GM12878 (cell line): ENCODE measurements at regions of chr15 and their contacts with region 1.

Region 1: DNA sequence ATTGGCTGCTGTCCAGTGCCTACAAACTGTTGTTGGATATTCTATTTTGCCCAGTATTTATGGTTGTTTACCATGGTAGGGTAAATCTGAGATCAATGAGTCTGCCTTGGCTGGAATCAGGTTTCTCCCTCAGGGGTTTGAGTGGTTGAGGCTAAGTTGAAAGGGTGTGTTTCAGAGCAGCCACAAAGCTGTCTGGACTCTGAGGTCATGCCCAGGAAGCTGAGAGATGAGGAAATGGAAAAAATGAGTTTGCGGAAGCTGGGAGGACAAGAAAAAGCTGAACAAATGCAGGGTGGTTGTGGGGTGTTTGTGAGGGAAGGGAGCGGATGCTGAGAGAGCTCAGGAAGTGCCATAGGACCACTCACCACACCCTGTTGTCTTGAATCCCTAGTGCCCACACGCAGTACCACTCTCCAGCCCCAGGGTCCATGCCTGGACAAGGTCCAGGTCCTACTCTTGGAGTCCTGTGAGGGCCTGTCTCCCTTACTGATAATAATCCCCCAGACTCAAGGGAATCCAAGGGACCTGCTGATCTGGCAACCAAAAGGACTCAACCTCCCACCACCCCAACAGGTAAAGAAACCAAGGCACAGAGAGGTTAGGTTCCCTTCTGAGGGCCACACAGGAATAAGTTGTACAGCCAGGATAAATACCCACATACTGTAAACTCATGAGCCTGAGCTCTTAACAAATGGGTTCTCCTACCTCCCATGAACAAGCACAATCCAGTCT is 81.6 kb downstream of the PPCDC start:
- DNase-seq: peak; percentile 88
- ATAC-seq: peak; percentile 73
- H3K4me3 ChIP-seq: no peak overlapping the region
- H3K27ac ChIP-seq: peak overlapping the region; percentile 76
- H3K4me1 ChIP-seq: peaks cover 59% of the 10 kb centered on the region
- H3K27me3 ChIP-seq: no peaks in the 10 kb centered on the region
- CTCF ChIP-seq: 0 out of 6 replicates have a peak, but pooled peaks of 1 of the 3 experiments have one; percentile 6
- EP300 ChIP-seq: peak; percentile 61 to 76; a peak in 3 of 4 replicates
- POLR2A ChIP-seq: no peak; the same call in 1 of the 2 replicates
- RAD21 ChIP-seq: 0 out of 2 replicates have a peak, but pooled peaks have one; percentile 21

Region 2: GRCh38 chr15:74787251-74788041 is 317.5 kb before region 1 on chr15:
- CTCF ChIA-PET with region 1: no interaction called
- POLR2A ChIA-PET with region 1: no interaction called
- RAD21 ChIA-PET with region 1: no interaction called
- SMC1A ChIA-PET with region 1: no interaction called
- in situ Hi-C with region 1: no loop called
- intact Hi-C with region 1: loop called (anchors 2 kb)
- DNase-seq: peak; percentile 97
- ATAC-seq: peak; percentile 58
- H3K4me3 ChIP-seq: peak overlapping the region; percentile 94
- H3K27ac ChIP-seq: peak overlapping the region; percentile 96
- H3K4me1 ChIP-seq: peaks cover 55% of the 10 kb centered on the region
- H3K27me3 ChIP-seq: no peaks in the 10 kb centered on the region
- CTCF ChIP-seq: peak; percentile 79 to 93 (median 82)
- EP300 ChIP-seq: peak; percentile 83 to 88
- POLR2A ChIP-seq: peak; percentile 76
- RAD21 ChIP-seq: peak; percentile 45; the same call in 1 of the 2 replicates

Region 3: GRCh38 chr15:74816808-74817674 is 287.9 kb before region 1 on chr15:
- CTCF ChIA-PET with region 1: no interaction called
- POLR2A ChIA-PET with region 1: no interaction called
- RAD21 ChIA-PET with region 1: no interaction called
- SMC1A ChIA-PET with region 1: no interaction called
- in situ Hi-C with region 1: no loop called
- intact Hi-C with region 1: no loop called
- DNase-seq: no peak
- ATAC-seq: no peak
- H3K4me3 ChIP-seq: no peak overlapping the region
- H3K27ac ChIP-seq: no peak overlapping the region
- H3K4me1 ChIP-seq: peaks cover 16% of the 10 kb centered on the region
- H3K27me3 ChIP-seq: no peaks in the 10 kb centered on the region
- CTCF ChIP-seq: no peak
- EP300 ChIP-seq: no peak
- POLR2A ChIP-seq: no peak
- RAD21 ChIP-seq: no peak

Region 4: GRCh38 chr15:75069301-75069925 is 35.6 kb before region 1 on chr15:
- CTCF ChIA-PET with region 1: interaction called, 3 read pairs
- POLR2A ChIA-PET with region 1: interaction called, 16 read pairs
- RAD21 ChIA-PET with region 1: interaction called, 51 read pairs
- SMC1A ChIA-PET with region 1: interaction called, 18 read pairs
- in situ Hi-C with region 1: no loop called
- intact Hi-C with region 1: loop called (anchors 5 kb)
- DNase-seq: peak; percentile 87
- ATAC-seq: peak; percentile 92
- H3K4me3 ChIP-seq: no peak overlapping the region
- H3K27ac ChIP-seq: peak overlapping the region; percentile 89
- H3K4me1 ChIP-seq: peaks cover 58% of the 10 kb centered on the region
- H3K27me3 ChIP-seq: no peaks in the 10 kb centered on the region
- CTCF ChIP-seq: no peak
- EP300 ChIP-seq: peak; percentile 90 to 91; a peak in 3 of 4 replicates
- POLR2A ChIP-seq: peak; percentile 65
- RAD21 ChIP-seq: no peak; the same call in 1 of the 2 replicates

Region 5: DNA sequence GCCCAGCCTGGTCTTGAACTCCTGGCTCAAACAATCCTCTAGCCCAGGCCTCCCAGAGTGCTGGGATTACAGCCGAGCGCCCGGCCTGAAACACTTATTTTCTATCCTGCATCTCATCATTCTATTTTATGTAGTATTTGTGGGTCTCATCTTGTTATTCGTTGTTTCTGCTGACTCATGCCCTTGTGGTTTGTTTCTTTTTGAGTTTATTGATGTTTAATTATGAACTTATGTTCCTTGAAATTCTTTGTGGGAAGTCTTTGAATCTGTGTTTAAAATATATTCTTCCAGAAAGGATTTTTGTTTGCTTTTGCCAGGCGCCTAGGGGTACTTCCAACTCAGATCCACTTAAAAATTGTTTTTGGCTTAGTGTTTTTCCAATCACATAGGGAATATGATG is 18.4 kb after region 1 on chr15:
- CTCF ChIA-PET with region 1: no interaction called
- POLR2A ChIA-PET with region 1: interaction called, 49 read pairs
- RAD21 ChIA-PET with region 1: interaction called, 52 read pairs
- SMC1A ChIA-PET with region 1: interaction called, 48 read pairs
- in situ Hi-C with region 1: no loop called
- intact Hi-C with region 1: no loop called
- DNase-seq: no peak
- ATAC-seq: no peak
- H3K4me3 ChIP-seq: no peak overlapping the region
- H3K27ac ChIP-seq: peak overlapping the region; percentile 41
- H3K4me1 ChIP-seq: peaks cover 41% of the 10 kb centered on the region
- H3K27me3 ChIP-seq: no peaks in the 10 kb centered on the region
- CTCF ChIP-seq: no peak
- EP300 ChIP-seq: no peak
- POLR2A ChIP-seq: no peak
- RAD21 ChIP-seq: no peak

Region 6: DNA sequence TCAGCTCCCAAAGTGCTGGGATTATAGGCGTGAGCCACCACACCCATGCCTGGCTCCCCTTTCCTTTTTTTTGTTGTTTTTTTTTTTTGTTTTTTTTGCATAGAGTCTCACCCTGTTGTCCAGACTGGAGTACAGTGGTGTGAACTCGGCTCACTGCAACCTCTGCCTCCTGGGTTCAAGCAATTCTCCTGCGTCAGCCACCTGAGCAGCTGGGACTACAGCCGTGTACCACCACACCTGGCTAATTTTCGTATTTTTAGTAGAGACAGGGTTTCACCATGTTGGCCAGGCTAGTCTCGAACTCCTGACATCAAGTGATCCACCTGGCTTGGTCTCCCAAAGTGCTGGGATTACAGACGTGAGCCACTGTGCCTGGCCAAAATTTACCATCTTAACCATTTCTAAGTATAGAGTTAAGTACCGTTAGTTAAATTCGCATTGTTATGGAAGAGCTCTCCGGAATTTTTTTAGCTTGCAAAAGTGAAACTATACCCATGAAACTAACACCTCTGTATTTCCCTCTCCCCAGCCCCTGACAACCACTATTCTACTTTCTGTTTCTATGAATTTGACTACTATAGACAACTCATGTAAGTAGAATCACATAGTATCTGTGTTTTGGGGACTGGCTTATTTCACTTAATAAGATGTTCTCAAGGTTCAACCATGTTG is 25.8 kb after region 1 on chr15:
- CTCF ChIA-PET with region 1: interaction called, 5 read pairs
- POLR2A ChIA-PET with region 1: interaction called, 49 read pairs
- RAD21 ChIA-PET with region 1: interaction called, 52 read pairs
- SMC1A ChIA-PET with region 1: interaction called, 48 read pairs
- in situ Hi-C with region 1: no loop called
- intact Hi-C with region 1: no loop called
- DNase-seq: peak; percentile 89
- ATAC-seq: peak; percentile 92
- H3K4me3 ChIP-seq: peak overlapping the region; percentile 13; the same call in 1 of the 2 replicates
- H3K27ac ChIP-seq: peak overlapping the region; percentile 99
- H3K4me1 ChIP-seq: peaks cover 67% of the 10 kb centered on the region
- H3K27me3 ChIP-seq: no peaks in the 10 kb centered on the region
- CTCF ChIP-seq: no peak
- EP300 ChIP-seq: peak; percentile 55 to 82; a peak in 3 of 4 replicates
- POLR2A ChIP-seq: no peak
- RAD21 ChIP-seq: 0 out of 2 replicates have a peak, but pooled peaks have one; percentile 9

Region 7: GRCh38 chr15:75138016-75138999 is 33.3 kb after region 1 on chr15:
- CTCF ChIA-PET with region 1: no interaction called
- POLR2A ChIA-PET with region 1: interaction called, 6 read pairs
- RAD21 ChIA-PET with region 1: interaction called, 6 read pairs
- SMC1A ChIA-PET with region 1: interaction called, 21 read pairs
- in situ Hi-C with region 1: no loop called
- intact Hi-C with region 1: no loop called
- DNase-seq: no peak
- ATAC-seq: peak; percentile 21; the same call in 1 of the 3 replicates
- H3K4me3 ChIP-seq: no peak overlapping the region
- H3K27ac ChIP-seq: no peak overlapping the region
- H3K4me1 ChIP-seq: peaks cover 40% of the 10 kb centered on the region
- H3K27me3 ChIP-seq: no peaks in the 10 kb centered on the region
- CTCF ChIP-seq: no peak
- EP300 ChIP-seq: no peak
- POLR2A ChIP-seq: no peak
- RAD21 ChIP-seq: no peak

Region 8: DNA sequence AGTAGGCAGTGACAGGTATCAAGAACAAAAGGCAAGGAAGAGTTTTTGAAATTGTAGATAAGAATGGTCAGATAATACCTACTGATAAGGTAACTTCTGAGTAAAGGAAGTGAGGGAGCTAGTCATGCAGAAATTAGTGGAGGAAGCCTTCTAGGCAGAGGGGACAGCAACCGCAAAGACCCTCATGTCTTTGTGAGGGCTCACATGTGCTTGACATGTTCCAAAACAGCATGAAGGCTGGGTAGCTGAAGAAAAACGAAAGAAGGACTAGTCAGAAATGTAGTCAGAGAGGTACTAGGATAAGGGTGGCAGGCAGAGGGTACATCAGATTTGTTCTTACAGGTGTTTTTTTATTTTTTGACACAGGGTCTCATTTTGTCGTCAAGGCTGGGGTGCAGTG is 341.2 kb after region 1 on chr15:
- CTCF ChIA-PET with region 1: no interaction called
- POLR2A ChIA-PET with region 1: no interaction called
- RAD21 ChIA-PET with region 1: no interaction called
- SMC1A ChIA-PET with region 1: no interaction called
- in situ Hi-C with region 1: no loop called
- intact Hi-C with region 1: no loop called
- DNase-seq: peak; percentile 11
- ATAC-seq: no peak
- H3K4me3 ChIP-seq: peak overlapping the region; percentile 13; the same call in 1 of the 2 replicates
- H3K27ac ChIP-seq: peak overlapping the region; percentile 23
- H3K4me1 ChIP-seq: peaks cover 25% of the 10 kb centered on the region
- H3K27me3 ChIP-seq: no peaks in the 10 kb centered on the region
- CTCF ChIP-seq: no peak
- EP300 ChIP-seq: no peak
- POLR2A ChIP-seq: no peak
- RAD21 ChIP-seq: no peak